WTC11 (cell line): ENCODE measurements at regions of chr15 and their contacts with region 1.

Region 1: DNA sequence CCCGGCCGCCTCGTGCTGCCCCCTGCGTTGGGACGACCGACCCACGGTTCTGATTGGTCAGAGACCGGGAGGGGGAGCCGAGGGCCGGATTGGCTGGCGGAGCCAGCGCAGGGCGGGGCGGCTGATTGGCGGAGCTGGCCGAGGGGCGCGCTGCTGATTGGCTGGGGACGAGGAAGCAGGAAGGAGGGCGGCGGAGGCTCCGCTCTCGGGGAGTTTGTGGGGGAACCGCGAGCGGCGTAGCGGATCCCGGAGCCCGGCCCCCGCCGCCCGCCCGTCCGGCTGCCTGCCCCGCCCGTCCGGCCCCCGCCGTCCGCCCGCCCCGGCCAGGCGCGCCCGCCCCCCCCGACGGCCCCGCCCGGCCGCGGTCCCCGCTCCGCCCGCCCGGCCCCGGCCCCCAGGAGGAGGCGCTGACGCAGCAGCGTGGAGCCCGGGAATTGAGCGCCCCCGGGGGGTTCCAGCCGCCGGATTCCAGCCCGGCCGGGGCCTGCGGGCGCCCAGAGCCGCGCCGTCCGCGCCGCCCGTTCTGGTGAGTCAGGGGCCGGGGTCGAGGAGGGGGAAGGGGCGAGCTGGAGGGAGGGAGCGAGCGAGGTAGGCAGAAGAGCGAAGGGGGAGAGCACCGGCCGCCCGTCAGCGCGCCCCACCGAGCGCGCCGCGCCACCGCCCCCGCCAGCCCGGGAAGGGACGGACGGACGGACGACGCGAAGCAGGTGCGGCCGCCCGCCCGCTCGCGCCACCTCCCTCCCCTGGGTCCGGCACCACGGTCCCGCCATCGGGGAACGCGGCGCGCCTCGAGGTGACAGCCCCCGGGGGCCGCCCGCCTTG is at the start of gene BAHD1:
- DNase-seq: peak; percentile 99
- ATAC-seq: peak; percentile 69
- H3K4me3 Mint-ChIP-seq: peak within 1 kb of the TSS; percentile 90
- H3K27ac Mint-ChIP-seq: peak within 1 kb of the TSS; percentile 78
- H3K4me1 Mint-ChIP-seq: peaks cover 58% of the 10 kb centered on the region
- H3K27me3 Mint-ChIP-seq: no peaks in the 10 kb centered on the region
- CTCF ChIP-seq: no peak
- total RNA-seq, gene BAHD1: 40.7 to 49.1 TPM (median 41.5 TPM) in 3 replicates

Region 2: GRCh38 chr15:40414816-40415215 is 26.1 kb before region 1 on chr15:
- CTCF ChIA-PET with region 1: no interaction called
- POLR2A ChIA-PET with region 1: no interaction called
- DNase-seq: no peak
- ATAC-seq: no peak
- H3K4me3 Mint-ChIP-seq: no peak overlapping the region
- H3K27ac Mint-ChIP-seq: no peak overlapping the region
- H3K4me1 Mint-ChIP-seq: no peaks in the 10 kb centered on the region
- H3K27me3 Mint-ChIP-seq: no peaks in the 10 kb centered on the region
- CTCF ChIP-seq: no peak

Region 3: GRCh38 chr15:40454904-40455391 is 14.0 kb after region 1 on chr15:
- CTCF ChIA-PET with region 1: interaction called, 7 read pairs
- POLR2A ChIA-PET with region 1: interaction called, 32 read pairs
- DNase-seq: no peak
- ATAC-seq: no peak
- H3K4me3 Mint-ChIP-seq: no peak overlapping the region
- H3K27ac Mint-ChIP-seq: peak overlapping the region; percentile 83
- H3K4me1 Mint-ChIP-seq: peaks cover 64% of the 10 kb centered on the region
- H3K27me3 Mint-ChIP-seq: no peaks in the 10 kb centered on the region
- CTCF ChIP-seq: no peak

Region 4: GRCh38 chr15:40489274-40490175 is 48.6 kb after region 1 on chr15:
- CTCF ChIA-PET with region 1: no interaction called
- POLR2A ChIA-PET with region 1: no interaction called
- DNase-seq: no peak
- ATAC-seq: no peak; the same call in 1 of the 2 replicates
- H3K4me3 Mint-ChIP-seq: no peak overlapping the region
- H3K27ac Mint-ChIP-seq: no peak overlapping the region
- H3K4me1 Mint-ChIP-seq: no peaks in the 10 kb centered on the region
- H3K27me3 Mint-ChIP-seq: no peaks in the 10 kb centered on the region
- CTCF ChIP-seq: no peak

Region 5: GRCh38 chr15:41104234-41104633 is 663.3 kb after region 1 on chr15:
- CTCF ChIA-PET with region 1: no interaction called
- POLR2A ChIA-PET with region 1: interaction called, 11 read pairs
- DNase-seq: no peak
- ATAC-seq: no peak
- H3K4me3 Mint-ChIP-seq: no peak overlapping the region
- H3K27ac Mint-ChIP-seq: no peak overlapping the region
- H3K4me1 Mint-ChIP-seq: peaks cover 4% of the 10 kb centered on the region
- H3K27me3 Mint-ChIP-seq: no peaks in the 10 kb centered on the region
- CTCF ChIP-seq: no peak